ENCODE measurements at regions of chr4 and their contacts with region 1.

Region 1: GRCh38 chr4:86934771-86935565 is at the start of gene AFF1:
- DNase-seq: peak; percentile 96
- H3K4me3 Mint-ChIP-seq: peak within 1 kb of the TSS; percentile 94
- H3K27ac Mint-ChIP-seq: peak within 1 kb of the TSS; percentile 98
- H3K4me1 Mint-ChIP-seq: peaks cover 48% of the 10 kb centered on the region
- H3K27me3 Mint-ChIP-seq: no peaks in the 10 kb centered on the region
- total RNA-seq, gene AFF1: 44.0 and 44.3 TPM in 2 replicates

Region 2: DNA sequence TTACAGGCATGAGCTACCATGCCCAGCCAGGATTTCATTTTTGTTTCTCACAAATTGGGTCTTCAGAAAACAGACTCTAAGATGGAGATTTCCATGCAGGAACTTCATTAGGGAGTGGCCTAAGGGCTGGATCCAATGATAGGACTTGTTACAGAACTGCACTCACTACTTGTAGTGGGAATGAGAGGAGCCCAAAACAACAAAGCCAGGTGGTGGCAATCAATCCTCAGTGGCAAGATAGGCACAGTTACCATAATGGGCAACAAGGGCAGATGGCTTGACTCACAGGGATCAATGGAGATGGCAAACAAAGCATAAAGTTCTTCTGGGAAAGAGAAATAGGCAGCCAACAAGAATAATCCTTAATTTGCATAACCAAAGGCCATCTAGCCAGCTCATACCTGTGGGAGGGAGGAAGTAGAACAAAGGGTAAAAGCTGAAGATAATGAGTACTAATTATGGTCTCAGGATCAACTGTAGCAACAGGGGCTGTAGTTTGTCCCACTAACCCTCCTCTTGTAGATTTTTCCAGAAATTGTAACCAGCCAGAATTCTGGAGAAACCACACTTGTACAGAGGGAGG is 502.3 kb before region 1 on chr4:
- intact Hi-C with region 1: no loop called
- DNase-seq: no peak
- H3K4me3 Mint-ChIP-seq: no peak overlapping the region
- H3K27ac Mint-ChIP-seq: no peak overlapping the region
- H3K4me1 Mint-ChIP-seq: no peaks in the 10 kb centered on the region
- H3K27me3 Mint-ChIP-seq: no peaks in the 10 kb centered on the region

Region 3: GRCh38 chr4:86948276-86948675 is 13.3 kb after region 1 on chr4:
- intact Hi-C with region 1: no loop called
- DNase-seq: no peak
- H3K4me3 Mint-ChIP-seq: no peak overlapping the region
- H3K27ac Mint-ChIP-seq: no peak overlapping the region
- H3K4me1 Mint-ChIP-seq: peaks cover 23% of the 10 kb centered on the region
- H3K27me3 Mint-ChIP-seq: no peaks in the 10 kb centered on the region

Region 4: DNA sequence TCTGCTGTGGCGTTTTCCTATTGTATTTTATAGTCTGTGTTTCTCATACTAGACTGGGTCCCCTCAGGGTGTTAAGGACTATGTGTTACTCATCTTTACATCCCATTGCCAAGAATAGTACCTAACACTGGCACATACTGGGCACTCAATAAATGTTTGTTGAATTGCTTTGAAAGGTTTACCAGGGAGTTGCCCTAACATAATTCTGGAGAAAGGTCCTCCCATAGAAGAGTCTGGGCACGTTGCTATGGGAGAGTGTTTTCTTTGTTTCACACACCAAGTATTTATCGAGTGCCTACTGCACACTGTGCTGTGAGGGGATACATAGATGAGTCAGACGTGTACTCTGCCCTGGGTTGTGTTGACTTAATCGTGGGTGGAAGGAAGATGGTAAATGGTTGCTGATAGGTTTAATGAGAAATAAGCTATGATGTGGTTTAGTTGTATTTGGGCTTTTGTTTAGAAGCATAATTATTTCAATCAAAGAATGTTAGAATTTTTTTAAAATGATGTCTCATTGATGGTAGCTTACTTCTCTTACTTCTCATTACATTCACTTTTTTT is 42.7 kb after region 1 on chr4:
- intact Hi-C with region 1: loop called (anchors 2 kb)
- DNase-seq: peak; percentile 61
- H3K4me3 Mint-ChIP-seq: no peak overlapping the region
- H3K27ac Mint-ChIP-seq: no peak overlapping the region
- H3K4me1 Mint-ChIP-seq: peaks cover 44% of the 10 kb centered on the region
- H3K27me3 Mint-ChIP-seq: no peaks in the 10 kb centered on the region

Region 5: GRCh38 chr4:87058356-87059073 is 123.5 kb after region 1 on chr4:
- intact Hi-C with region 1: loop called (anchors 1 kb)
- DNase-seq: no peak
- H3K4me3 Mint-ChIP-seq: peak overlapping the region; percentile 39
- H3K27ac Mint-ChIP-seq: peak overlapping the region; percentile 75
- H3K4me1 Mint-ChIP-seq: peaks cover 47% of the 10 kb centered on the region
- H3K27me3 Mint-ChIP-seq: no peaks in the 10 kb centered on the region

Region 6: GRCh38 chr4:87093443-87094123 is 158.6 kb after region 1 on chr4:
- intact Hi-C with region 1: loop called (anchors 1 kb)
- DNase-seq: peak; percentile 80
- H3K4me3 Mint-ChIP-seq: no peak overlapping the region
- H3K27ac Mint-ChIP-seq: peak overlapping the region; percentile 34
- H3K4me1 Mint-ChIP-seq: peaks cover 22% of the 10 kb centered on the region
- H3K27me3 Mint-ChIP-seq: no peaks in the 10 kb centered on the region

Region 7: DNA sequence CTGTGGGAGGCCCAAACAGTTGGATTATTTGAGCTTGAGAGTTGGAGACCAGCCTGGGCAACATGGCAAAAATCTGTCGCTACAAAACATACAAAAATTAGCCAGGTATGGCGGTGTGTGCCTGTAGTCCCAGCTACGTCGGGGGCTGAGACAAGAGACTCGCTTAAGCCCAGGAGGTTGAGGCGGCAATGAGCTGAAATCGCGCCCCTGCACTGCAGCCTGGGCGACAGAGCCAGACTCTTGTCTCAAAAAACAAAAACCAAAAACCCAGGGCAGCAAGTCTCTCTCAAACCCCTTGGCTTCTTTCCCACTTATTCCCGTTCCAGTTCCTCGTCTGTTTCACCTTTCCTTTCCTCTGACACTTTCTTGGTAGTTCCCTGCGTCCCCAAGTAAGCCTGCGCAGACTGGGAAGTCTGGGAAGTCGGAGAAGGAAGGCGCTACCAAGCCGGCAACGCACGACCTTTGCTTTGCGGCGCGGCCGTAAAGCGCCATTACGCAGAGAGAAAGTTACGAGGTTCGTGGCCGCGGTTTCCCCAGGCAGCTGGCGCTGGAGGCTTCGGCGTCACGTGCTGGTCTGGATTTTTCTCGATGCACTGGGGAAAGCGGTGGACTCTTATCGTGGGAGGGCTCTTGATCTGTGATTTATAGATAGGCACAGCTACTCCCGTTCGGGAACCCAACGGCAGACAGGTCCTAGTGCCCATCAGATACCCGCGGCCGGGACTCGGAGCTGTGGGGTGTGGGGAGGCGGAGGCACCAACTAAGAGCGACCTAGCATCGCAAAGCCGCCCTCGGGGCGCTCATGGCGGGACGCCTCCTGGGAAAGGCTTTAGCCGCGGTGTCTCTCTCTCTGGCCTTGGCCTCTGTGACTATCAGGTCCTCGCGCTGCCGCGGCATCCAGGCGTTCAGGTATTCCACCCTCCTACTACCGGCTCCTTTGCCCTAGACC is 487.4 kb after region 1 on chr4 and contains the start of gene NUDT9:
- intact Hi-C with region 1: loop called (anchors 10 kb)
- DNase-seq: peak; percentile 96
- H3K4me3 Mint-ChIP-seq: peak within 1 kb of the TSS; percentile 99
- H3K27ac Mint-ChIP-seq: peak within 1 kb of the TSS; percentile 98
- H3K4me1 Mint-ChIP-seq: peaks cover 19% of the 10 kb centered on the region
- H3K27me3 Mint-ChIP-seq: no peaks in the 10 kb centered on the region
- total RNA-seq, gene NUDT9: 16.5 and 17.4 TPM in 2 replicates